ENCODE measurements at regions of chr1 and their contacts with region 1.

Region 1: DNA sequence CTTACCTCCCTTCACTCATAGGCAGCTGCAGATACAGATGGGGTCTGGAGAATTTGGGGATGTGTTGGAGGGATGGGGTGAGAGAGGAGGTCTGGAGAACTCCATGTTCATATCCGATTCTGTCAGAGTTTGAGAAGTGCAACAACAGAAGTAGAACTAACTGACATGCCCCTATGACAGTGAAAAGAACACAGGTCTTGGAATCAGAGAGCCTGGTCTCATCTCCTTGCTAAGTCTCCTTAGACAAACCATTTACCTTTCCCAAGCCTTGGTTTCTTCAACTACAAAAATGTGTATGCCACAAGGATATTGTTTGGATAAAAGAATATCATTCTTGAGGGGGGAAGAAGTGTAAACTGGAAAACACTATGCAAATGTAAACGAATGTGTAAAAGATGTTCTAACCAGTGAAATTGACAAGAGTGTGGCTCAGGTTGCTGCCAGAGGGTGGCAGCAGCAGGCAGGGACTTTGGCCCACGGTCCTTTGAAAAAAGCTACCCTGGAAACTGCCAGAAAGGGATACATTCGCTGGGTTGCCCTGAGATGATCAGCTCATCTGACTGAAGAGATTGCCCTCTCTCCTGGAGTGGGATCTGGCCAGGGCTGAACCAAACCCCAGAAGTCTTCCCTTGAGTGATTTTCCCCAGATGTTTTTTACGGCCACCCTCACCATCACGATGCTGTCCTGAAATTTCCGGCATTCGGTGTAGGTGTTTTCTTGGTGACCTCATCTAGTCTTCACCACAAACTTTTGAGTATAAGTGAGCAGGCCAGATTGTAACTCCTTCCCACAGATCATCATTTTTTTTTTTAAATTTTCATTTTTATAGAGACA is 17.0 kb upstream of the CD2 start:
- DNase-seq: peak; percentile 66
- ATAC-seq: peak; percentile 62
- H3K4me3 ChIP-seq: no peak overlapping the region
- H3K27ac ChIP-seq: peak overlapping the region; percentile 97
- H3K4me1 ChIP-seq: peaks cover 39% of the 10 kb centered on the region
- H3K27me3 ChIP-seq: no peaks in the 10 kb centered on the region
- CTCF ChIP-seq: peak; percentile 88 to 95 (median 93); a peak in 5 of 6 replicates
- EP300 ChIP-seq: no peak
- POLR2A ChIP-seq: peak; percentile 51; the same call in 1 of the 2 replicates
- RAD21 ChIP-seq: peak; percentile 95

Region 2: GRCh38 chr1:116748272-116748671 is 11.0 kb after region 1 on chr1:
- CTCF ChIA-PET with region 1: interaction called, 8 read pairs
- POLR2A ChIA-PET with region 1: interaction called, 3 read pairs
- RAD21 ChIA-PET with region 1: interaction called, 9 read pairs
- SMC1A ChIA-PET with region 1: interaction called, 18 read pairs
- in situ Hi-C with region 1: no loop called
- intact Hi-C with region 1: no loop called
- DNase-seq: no peak
- ATAC-seq: no peak
- H3K4me3 ChIP-seq: no peak overlapping the region
- H3K27ac ChIP-seq: no peak overlapping the region
- H3K4me1 ChIP-seq: no peaks in the 10 kb centered on the region
- H3K27me3 ChIP-seq: no peaks in the 10 kb centered on the region
- CTCF ChIP-seq: no peak
- EP300 ChIP-seq: no peak
- POLR2A ChIP-seq: no peak
- RAD21 ChIP-seq: no peak

Region 3: DNA sequence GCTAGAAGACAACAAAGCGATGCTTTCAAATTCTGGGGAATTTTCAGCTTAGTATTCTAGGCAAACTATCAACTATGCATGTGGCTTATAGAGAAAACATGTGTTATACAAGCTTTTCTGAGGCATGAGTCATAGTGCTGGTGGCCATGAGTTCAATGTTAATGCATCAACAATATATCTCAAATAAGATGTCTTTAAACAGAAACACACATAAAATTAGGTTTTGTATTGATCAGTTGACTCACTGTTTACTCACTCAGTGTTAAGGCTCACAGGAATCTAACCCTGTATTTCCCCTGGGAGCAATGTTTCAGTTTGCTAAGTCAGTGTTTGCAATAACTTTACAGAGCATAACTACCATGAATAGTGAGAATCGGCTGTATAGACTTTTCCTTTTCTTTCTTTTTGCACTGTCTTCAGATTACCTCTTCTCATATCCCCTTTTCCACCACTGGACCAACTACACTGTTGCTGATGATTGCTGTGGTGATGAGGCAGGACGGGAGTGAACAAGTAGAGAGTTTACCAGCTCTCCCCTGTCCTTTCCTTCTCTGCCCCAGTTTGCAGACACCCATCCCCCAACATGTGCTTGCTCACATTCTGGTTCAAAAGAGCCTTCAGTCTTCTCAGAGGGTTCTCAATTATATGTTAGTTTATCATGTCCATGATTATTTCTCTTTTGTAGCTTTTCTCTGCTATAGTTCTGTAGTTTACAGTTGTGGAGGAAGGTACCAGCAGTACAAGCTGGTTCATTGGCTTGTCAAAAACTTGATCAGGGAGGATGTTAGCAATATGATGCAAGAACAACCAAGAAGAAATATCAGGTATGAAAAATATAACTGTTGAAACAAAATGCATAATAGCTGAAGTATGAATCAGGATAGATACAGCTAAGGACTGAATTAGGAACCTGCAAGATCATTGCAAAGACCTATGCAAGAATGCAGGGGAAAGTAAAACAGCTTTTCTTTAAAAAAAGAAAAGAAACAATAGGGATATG is 40.9 kb after region 1 on chr1:
- CTCF ChIA-PET with region 1: interaction called, 120 read pairs
- POLR2A ChIA-PET with region 1: no interaction called
- RAD21 ChIA-PET with region 1: interaction called, 176 read pairs
- SMC1A ChIA-PET with region 1: interaction called, 224 read pairs
- in situ Hi-C with region 1: no loop called
- intact Hi-C with region 1: no loop called
- DNase-seq: no peak
- ATAC-seq: peak; percentile 84
- H3K4me3 ChIP-seq: no peak overlapping the region
- H3K27ac ChIP-seq: no peak overlapping the region
- H3K4me1 ChIP-seq: peaks cover 6% of the 10 kb centered on the region; the same call in 1 of the 2 replicates
- H3K27me3 ChIP-seq: no peaks in the 10 kb centered on the region
- CTCF ChIP-seq: no peak
- EP300 ChIP-seq: no peak
- POLR2A ChIP-seq: no peak
- RAD21 ChIP-seq: no peak

Region 4: GRCh38 chr1:116826818-116827606 is 89.8 kb after region 1 on chr1:
- CTCF ChIA-PET with region 1: interaction called, 50 read pairs
- POLR2A ChIA-PET with region 1: interaction called, 12 read pairs
- RAD21 ChIA-PET with region 1: interaction called, 49 read pairs
- SMC1A ChIA-PET with region 1: interaction called, 80 read pairs
- in situ Hi-C with region 1: loop called (anchors 5 kb)
- intact Hi-C with region 1: loop called (anchors 2 kb)
- DNase-seq: peak; percentile 97
- ATAC-seq: peak; percentile 87
- H3K4me3 ChIP-seq: no peak overlapping the region
- H3K27ac ChIP-seq: peak overlapping the region; percentile 60
- H3K4me1 ChIP-seq: peaks cover 23% of the 10 kb centered on the region
- H3K27me3 ChIP-seq: no peaks in the 10 kb centered on the region; a peak in 1 of 4 replicates
- CTCF ChIP-seq: no peak
- EP300 ChIP-seq: peak; percentile 17 to 90; a peak in 2 of 4 replicates
- POLR2A ChIP-seq: no peak
- RAD21 ChIP-seq: 0 out of 2 replicates have a peak, but pooled peaks have one; percentile 10

Region 5: DNA sequence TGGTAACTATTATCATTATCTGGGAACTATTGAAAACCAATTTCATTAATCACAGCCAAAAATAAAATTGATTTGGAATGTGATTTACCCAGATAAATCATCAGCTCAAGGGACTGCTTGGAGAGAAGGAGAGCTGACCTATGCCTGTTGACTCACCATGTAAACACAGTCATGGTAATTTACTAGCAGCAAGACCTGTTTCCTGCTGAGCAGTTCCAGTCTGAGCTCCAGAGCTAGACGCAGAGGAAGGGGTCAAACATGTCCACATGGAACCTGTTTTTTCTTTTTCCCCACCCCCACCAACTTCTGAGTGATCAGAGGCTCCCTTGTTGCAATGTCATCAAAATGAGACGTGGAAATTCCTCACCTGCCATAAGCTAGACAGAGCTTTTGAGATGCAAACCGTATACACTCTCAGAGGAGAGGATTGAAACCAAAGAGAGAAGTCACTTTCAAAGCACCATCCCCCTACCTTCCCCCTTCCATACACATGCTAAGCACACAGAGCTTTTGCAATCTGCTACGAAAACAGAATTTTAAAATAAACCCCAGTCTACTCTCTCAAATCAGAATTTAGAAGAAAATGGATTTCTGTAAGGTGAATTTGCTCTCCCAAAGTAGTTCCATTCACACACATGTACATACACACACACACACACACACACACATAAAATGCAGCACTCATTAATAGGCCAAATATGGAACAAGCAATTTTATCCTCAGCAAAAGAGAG is 116.6 kb after region 1 on chr1:
- CTCF ChIA-PET with region 1: interaction called, 14 read pairs
- POLR2A ChIA-PET with region 1: interaction called, 5 read pairs
- RAD21 ChIA-PET with region 1: interaction called, 14 read pairs
- SMC1A ChIA-PET with region 1: interaction called, 18 read pairs
- in situ Hi-C with region 1: no loop called
- intact Hi-C with region 1: no loop called
- DNase-seq: no peak
- ATAC-seq: peak; percentile 81
- H3K4me3 ChIP-seq: no peak overlapping the region
- H3K27ac ChIP-seq: no peak overlapping the region
- H3K4me1 ChIP-seq: 0 out of 2 replicates have a peak, but pooled peaks cover 3% of the 10 kb centered on the region
- H3K27me3 ChIP-seq: no peaks in the 10 kb centered on the region
- CTCF ChIP-seq: no peak
- EP300 ChIP-seq: no peak
- POLR2A ChIP-seq: no peak
- RAD21 ChIP-seq: no peak

Region 6: GRCh38 chr1:116956378-116956777 is 219.1 kb after region 1 on chr1:
- CTCF ChIA-PET with region 1: no interaction called
- POLR2A ChIA-PET with region 1: no interaction called
- RAD21 ChIA-PET with region 1: no interaction called
- SMC1A ChIA-PET with region 1: no interaction called
- in situ Hi-C with region 1: no loop called
- intact Hi-C with region 1: no loop called
- DNase-seq: no peak
- ATAC-seq: no peak
- H3K4me3 ChIP-seq: no peak overlapping the region
- H3K27ac ChIP-seq: no peak overlapping the region
- H3K4me1 ChIP-seq: no peaks in the 10 kb centered on the region
- H3K27me3 ChIP-seq: no peaks in the 10 kb centered on the region; a peak in 1 of 4 replicates
- CTCF ChIP-seq: no peak
- EP300 ChIP-seq: no peak
- POLR2A ChIP-seq: no peak
- RAD21 ChIP-seq: no peak

Region 7: DNA sequence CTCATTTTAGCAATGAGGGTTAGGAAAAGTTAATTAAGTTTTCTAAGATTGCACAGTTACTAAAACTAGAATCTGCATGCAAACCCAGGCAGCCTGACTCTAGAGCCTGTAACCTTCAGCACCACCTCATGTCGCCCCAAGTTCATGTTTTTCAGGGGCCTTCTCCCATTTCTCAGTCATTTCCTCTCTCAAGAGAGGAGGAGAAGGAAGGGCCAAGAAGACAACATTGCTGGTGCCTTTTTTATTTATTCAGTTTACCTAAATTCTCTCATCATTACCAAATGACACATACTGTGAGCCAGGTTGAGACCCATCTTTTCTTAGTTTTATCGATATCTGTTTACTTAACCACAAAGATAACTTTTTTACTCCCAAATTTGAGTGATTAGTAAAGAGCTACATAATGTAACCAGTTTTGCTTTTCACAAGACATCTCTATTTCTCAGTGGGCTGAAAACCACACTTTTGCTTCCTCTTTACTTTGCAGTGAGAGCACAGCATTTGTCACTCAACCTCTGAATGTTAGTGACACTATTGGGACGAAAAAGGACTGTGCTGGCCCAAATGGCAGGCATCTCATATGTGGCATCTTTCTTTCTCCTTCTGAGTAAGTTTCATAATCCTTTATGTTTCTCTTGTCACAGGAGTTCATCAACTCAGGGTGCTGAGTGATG is 264.2 kb after region 1 on chr1 and contains the start of gene CD101:
- CTCF ChIA-PET with region 1: interaction called, 9 read pairs
- POLR2A ChIA-PET with region 1: no interaction called
- RAD21 ChIA-PET with region 1: interaction called, 15 read pairs
- SMC1A ChIA-PET with region 1: interaction called, 16 read pairs
- in situ Hi-C with region 1: no loop called
- intact Hi-C with region 1: loop called (anchors 2 kb)
- DNase-seq: peak; percentile 82
- ATAC-seq: peak; percentile 95
- H3K4me3 ChIP-seq: peak within 1 kb of the TSS; percentile 6; the same call in 1 of the 2 replicates
- H3K27ac ChIP-seq: peak within 1 kb of the TSS; percentile 49
- H3K4me1 ChIP-seq: peaks cover 20% of the 10 kb centered on the region
- H3K27me3 ChIP-seq: no peaks in the 10 kb centered on the region
- CTCF ChIP-seq: no peak
- EP300 ChIP-seq: peak; percentile 66 to 85
- POLR2A ChIP-seq: no peak
- RAD21 ChIP-seq: peak; percentile 36; the same call in 1 of the 2 replicates
- polyA plus RNA-seq, gene CD101: 1.9 to 2.7 TPM

Measured in GM12878 (cell line).